Cardiac septum (tissue), 1 donor: ENCODE measurements at regions of chr4 and their contacts with region 1.

Region 1: GRCh38 chr4:140004549-140004895 is 149.5 kb downstream of the MAML3 start:
- DNase-seq: peak; percentile 82

Region 2: DNA sequence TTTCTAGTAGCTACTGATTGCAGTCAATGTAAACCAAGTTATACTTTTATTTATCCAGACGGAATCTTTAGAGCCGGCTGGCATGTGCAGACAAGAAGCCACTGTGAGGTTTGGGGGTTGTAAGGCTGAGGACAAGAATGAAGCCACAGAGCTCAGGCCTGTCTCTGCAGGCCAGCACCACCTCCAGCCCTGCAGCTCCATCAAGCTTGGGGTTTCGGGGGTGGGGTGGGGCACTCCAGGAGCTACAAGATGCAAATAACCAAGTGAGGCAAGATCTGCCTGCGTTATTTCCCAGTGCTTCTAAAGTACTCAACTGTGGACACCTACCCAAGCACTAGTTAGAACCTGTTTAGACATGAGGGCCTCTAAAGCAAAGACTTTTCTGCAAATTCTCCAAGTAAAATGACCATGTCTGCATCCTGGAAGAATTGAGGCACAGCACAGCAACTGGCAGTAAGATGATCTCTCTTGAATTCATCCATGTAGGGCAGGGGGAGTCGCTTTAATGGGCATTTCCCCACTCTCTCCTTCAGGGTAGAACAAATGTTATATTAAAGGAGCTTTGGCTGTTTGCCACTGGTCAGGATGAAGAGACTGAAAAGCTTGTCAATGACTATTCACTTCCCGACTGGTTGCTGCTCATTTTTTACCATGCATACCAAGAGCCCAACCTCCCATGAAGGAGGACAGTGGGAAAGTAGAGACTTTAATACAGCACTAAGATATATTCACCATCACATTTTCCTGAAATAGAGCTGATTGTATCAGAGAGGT is 116.4 kb before region 1 on chr4:
- intact Hi-C with region 1: loop called (anchors 5 kb)
- DNase-seq: no peak

Region 3: GRCh38 chr4:139956507-139957017 is 48.0 kb before region 1 on chr4:
- intact Hi-C with region 1: no loop called
- DNase-seq: no peak